Heart right ventricle (tissue), 16 donors: ENCODE measurements at regions of chr9 and their contacts with region 1.

Region 1: DNA sequence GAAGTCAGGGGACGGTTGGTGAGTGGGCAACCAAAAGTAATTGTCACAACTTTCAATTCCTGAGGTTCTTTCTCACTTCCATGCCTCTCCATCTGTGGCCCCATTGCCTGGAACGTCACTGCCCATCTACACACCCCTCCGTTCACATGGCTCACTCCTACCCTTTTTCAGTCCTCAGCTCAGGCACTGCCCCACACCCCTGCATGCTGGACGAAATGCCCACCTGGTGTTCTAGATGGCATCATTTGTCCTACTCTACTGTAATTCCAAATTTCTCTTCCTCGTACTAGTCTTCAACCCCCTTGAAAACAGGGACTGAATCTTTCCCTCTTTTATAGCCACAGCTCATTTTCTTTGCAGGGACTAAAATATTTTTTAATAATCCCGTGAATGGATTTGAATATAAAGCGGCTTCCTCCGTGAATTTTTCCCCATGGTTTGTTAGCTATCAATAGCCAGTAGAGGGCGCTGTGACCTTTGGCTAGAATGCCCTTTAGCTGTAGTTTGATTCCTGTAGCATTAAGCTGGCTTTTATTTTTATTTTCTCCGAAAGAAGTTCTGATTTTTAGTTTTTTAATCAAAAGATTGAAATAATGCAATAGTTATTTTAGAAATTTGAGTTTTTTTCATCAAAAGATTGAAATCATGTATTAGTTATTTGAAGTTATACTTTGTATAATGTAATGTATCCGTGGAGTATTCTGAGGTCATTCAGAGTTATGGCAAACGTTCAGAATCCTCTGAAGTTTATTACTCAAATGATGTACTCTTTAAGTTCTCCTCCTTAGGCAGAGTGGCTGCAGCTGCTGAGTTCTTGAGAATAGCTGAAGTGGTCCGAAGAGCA is 232.1 kb downstream of the SH3GL2 start:
- DNase-seq: peak in 1 of 2 donors; percentile 44
- ATAC-seq: no peak
- H3K4me3 ChIP-seq: no peak overlapping the region
- H3K27ac ChIP-seq: no peak overlapping the region
- H3K4me1 ChIP-seq: no peaks in the 10 kb centered on the region
- H3K27me3 ChIP-seq: peaks cover 0 to 26% (median 5%) of the 10 kb centered on the region in 7 donors
- CTCF ChIP-seq: peak; percentile 75 to 90 (median 84)

Region 2: DNA sequence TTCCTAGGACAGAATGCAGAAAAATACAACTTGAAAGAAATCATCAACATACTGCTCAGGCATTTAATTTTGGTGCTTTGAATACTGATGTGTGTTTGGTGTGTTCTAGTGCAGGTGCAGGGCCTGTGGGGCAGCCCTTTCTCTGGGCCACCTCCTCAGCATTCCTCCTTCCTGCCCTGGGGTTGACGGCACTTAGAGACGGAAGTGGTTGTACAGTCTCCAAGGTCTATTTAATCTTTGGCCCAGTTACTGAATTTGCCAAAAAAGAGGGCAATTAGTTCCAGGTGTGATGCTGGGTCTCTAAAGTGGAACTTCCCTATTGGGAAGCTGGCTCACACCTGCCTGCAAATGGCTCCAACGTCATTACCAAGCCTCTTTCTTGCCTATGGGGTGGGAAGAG is 37.0 kb after region 1 on chr9:
- intact Hi-C with region 1: no loop called
- DNase-seq: no peak
- ATAC-seq: no peak
- H3K4me3 ChIP-seq: no peak overlapping the region
- H3K27ac ChIP-seq: no peak overlapping the region
- H3K4me1 ChIP-seq: no peaks in the 10 kb centered on the region
- H3K27me3 ChIP-seq: no peaks in the 10 kb centered on the region
- CTCF ChIP-seq: no peak

Region 3: DNA sequence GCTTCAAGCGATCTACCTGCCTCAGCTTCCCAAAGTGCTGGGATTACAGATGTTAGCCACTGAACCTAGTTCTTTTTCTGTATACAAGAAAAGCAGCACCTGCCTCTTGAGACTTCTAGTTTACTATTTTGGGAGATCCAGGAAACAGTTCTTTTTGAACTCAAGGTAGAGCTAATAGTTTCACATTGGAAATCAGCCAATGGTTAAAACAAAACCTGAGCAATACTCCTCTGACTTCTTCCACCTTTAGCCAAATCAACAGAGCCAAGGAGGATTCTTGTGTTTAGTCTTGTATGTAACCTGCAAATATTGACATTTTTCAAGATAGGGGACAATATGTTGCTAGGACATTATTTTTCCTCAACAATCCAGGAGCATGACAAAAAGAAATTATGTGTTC is 117.3 kb after region 1 on chr9:
- intact Hi-C with region 1: no loop called
- DNase-seq: no peak
- ATAC-seq: no peak
- H3K4me3 ChIP-seq: no peak overlapping the region
- H3K27ac ChIP-seq: no peak overlapping the region
- H3K4me1 ChIP-seq: no peaks in the 10 kb centered on the region
- H3K27me3 ChIP-seq: peaks cover 0 to 4% (median 0%) of the 10 kb centered on the region in 7 donors
- CTCF ChIP-seq: no peak

Region 4: DNA sequence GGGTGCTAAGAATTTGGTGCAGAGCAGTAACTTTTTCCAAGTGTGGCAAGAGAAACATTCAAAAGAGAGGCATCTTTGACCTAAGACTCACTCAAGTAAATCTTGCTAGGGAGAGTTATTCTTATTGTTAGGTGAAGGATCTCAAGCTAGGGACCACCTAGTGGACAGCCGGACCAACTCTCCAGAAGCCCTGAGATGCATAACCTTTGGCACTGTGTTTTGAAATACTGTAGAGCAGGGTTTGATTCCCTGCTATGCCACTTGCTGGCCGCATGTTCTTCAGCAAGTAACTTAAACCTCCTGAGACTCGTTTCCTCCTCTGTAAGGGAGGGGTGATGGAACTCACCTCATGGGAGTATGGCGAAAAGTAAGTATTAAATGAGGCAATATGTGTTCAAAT is 326.9 kb after region 1 on chr9:
- intact Hi-C with region 1: loop called in 4 of 10 experiments (anchors 10 kb)
- DNase-seq: no peak
- ATAC-seq: no peak
- H3K4me3 ChIP-seq: no peak overlapping the region
- H3K27ac ChIP-seq: no peak overlapping the region
- H3K4me1 ChIP-seq: no peaks in the 10 kb centered on the region
- H3K27me3 ChIP-seq: peaks cover 0 to 5% (median 0%) of the 10 kb centered on the region in 7 donors
- CTCF ChIP-seq: no peak

Region 5: GRCh38 chr9:18143028-18143745 is 332.2 kb after region 1 on chr9:
- intact Hi-C with region 1: loop called in 4 of 10 experiments (anchors 10 kb)
- DNase-seq: no peak
- ATAC-seq: no peak
- H3K4me3 ChIP-seq: no peak overlapping the region
- H3K27ac ChIP-seq: no peak overlapping the region
- H3K4me1 ChIP-seq: no peaks in the 10 kb centered on the region
- H3K27me3 ChIP-seq: peaks cover 0 to 7% (median 0%) of the 10 kb centered on the region in 7 donors
- CTCF ChIP-seq: peak in 6 of 9 donors; percentile 15 to 30 (median 18)

Region 6: DNA sequence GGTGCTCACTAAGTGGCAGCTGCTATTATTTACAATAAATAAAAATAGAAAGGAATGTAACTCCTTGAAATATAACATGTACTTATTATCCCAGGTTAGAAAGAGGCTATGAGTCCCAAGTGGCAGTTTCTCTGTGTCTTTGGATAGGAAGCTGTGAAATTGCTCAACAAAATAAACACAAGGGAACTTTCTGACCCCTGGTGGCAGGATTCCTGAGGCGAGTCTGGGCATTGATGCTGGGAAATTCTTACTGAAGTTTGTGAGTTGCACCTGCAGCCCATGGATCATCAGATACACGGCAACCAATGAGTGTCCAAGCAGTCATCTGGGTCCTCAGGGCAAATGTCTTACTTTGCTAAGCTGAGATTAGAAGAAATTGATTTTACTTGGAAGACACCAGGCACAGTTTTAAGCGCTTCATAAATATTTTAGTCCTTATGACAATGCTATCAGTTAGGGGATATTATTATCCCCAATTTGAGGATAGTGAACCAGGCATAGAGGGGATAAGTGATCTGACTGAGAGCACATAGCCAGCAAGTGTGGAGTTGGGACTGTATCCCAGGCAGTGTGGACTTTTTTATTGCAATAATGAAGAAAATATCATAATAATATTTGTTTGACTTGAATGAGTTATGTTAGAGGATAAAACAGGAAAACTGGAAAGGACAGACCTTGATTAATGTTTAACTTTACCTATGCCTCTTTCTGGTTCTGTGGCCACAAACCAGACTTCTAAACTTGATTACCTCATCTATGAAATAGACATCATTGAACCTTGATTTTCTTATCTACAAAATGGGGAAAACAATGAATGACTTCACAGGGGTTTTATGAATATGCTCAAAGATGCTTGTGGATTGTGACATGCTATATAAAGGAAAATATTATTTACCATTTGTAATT is 397.5 kb after region 1 on chr9:
- intact Hi-C with region 1: loop called (anchors 1 to 5 kb)
- DNase-seq: peak in 1 of 2 donors; percentile 30
- ATAC-seq: peak in 1 of 8 donors; percentile 33
- H3K4me3 ChIP-seq: no peak overlapping the region
- H3K27ac ChIP-seq: no peak overlapping the region
- H3K4me1 ChIP-seq: no peaks in the 10 kb centered on the region
- H3K27me3 ChIP-seq: no peaks in the 10 kb centered on the region
- CTCF ChIP-seq: peak in 7 of 9 donors; percentile 39 to 63 (median 53)

Region 7: GRCh38 chr9:19028835-19029451 is 1218.0 kb after region 1 on chr9:
- intact Hi-C with region 1: loop called in 7 of 10 experiments (anchors 5 to 10 kb)
- DNase-seq: peak in 1 of 2 donors; percentile 60
- ATAC-seq: peak in 6 of 8 donors; percentile 65 to 81 (median 74)
- H3K4me3 ChIP-seq: no peak overlapping the region
- H3K27ac ChIP-seq: no peak overlapping the region
- H3K4me1 ChIP-seq: peaks cover 0 to 12% (median 0%) of the 10 kb centered on the region in 9 donors
- H3K27me3 ChIP-seq: peaks cover 0 to 5% (median 0%) of the 10 kb centered on the region in 7 donors
- CTCF ChIP-seq: peak; percentile 60 to 86 (median 78)